Testis (tissue), 5 donors: ENCODE measurements at regions of chr17 and their contacts with region 1.

Region 1: DNA sequence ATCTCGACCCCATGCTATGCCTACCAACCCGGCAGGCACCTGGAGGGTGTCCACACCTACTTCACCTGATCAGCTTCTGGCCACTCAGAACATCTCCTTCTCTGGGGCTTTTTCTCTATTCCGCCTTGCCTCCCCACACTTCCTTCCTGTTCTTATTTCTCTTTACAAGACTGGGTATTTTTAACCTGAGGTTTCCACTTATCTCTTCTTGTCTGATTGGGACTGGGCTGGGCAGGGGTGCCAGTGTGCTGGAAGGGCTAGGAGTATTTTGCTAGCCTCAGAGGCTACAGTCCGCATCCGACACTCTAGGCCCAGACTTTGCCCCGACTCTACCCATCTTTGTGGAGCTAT is 26.2 kb upstream of the ZNF652 start:
- DNase-seq: no peak
- H3K4me3 ChIP-seq: no peak overlapping the region
- H3K27ac ChIP-seq: no peak overlapping the region
- H3K4me1 ChIP-seq: peaks cover 13% of the 10 kb centered on the region
- H3K27me3 ChIP-seq: no peaks in the 10 kb centered on the region
- CTCF ChIP-seq: no peak
- POLR2A ChIP-seq: no peak

Region 2: DNA sequence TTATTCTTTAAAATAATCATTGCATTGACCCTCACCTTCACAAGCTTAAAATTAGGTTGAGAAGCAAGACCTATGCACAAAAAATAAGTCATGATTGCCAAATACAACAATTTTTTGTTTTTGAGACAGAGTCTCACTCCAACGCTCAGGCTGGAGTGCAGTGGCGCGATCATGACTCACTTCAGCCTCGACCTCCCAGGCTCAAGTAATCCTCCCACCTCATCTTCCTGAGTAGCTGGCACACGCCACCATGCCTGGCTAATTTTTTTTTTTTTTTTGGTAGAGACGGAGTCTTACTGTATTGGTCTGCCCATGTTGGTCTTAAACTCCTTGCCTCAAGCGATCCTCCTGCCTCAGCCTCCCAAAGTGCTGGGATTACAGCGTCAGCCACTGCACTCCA is 50.4 kb before region 1 on chr17:
- intact Hi-C with region 1: loop called (anchors 10 kb)
- DNase-seq: no peak
- H3K4me3 ChIP-seq: no peak overlapping the region
- H3K27ac ChIP-seq: no peak overlapping the region
- H3K4me1 ChIP-seq: peaks cover 14% of the 10 kb centered on the region
- H3K27me3 ChIP-seq: no peaks in the 10 kb centered on the region
- CTCF ChIP-seq: no peak
- POLR2A ChIP-seq: no peak